PC-3 (cell line): ENCODE measurements at regions of chr16 and their contacts with region 1.

Region 1: DNA sequence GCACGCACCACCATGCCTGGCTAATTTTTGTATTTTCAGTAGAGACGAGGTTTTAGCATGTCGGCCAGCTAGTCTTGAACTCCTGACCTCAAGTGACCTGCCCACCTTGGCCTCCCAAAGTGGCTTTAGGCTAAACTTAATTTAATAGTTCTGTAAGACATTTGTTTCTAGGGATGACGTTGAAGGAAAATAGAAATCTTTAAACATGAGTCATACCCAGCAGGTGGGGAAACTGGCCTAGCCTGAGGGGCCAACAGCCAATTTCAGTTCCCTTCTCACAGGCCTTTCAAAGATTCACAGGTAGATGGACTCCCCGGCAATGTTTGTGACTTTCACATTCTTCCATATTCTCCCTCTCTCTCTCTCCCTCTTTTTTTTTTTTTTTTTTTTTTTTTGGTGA is 18.1 kb upstream of the ITPRIPL2 start:
- DNase-seq: peak; percentile 86
- ATAC-seq: peak; percentile 33
- H3K4me3 ChIP-seq: no peak overlapping the region
- H3K27ac ChIP-seq: peak overlapping the region; percentile 81
- H3K4me1 ChIP-seq: peaks cover 44% of the 10 kb centered on the region
- H3K27me3 ChIP-seq: no peaks in the 10 kb centered on the region
- CTCF ChIP-seq: no peak

Region 2: DNA sequence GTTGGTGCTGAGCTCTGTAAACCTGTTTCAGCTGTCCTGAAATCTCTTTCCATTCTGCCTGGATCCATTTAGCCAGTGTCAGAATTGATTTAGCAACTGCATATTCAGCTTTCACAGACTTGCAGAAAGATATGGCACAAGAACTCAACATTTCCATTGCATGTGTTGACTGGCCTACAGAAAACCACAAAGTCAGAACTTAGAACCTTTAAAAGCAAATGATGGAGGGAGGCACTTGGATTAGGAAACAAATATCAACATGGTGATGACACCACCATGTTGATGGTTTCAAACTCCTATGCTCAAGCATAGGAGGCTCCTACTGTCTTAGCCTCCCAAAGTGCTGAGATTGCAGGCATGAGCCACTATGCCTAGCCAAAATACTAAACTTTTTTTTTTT is 242.0 kb before region 1 on chr16:
- CTCF ChIA-PET with region 1: no interaction called
- POLR2A ChIA-PET with region 1: no interaction called
- intact Hi-C with region 1: no loop called
- DNase-seq: no peak
- ATAC-seq: no peak
- H3K4me3 ChIP-seq: no peak overlapping the region
- H3K27ac ChIP-seq: no peak overlapping the region
- H3K4me1 ChIP-seq: no peaks in the 10 kb centered on the region
- H3K27me3 ChIP-seq: no peaks in the 10 kb centered on the region
- CTCF ChIP-seq: no peak

Region 3: GRCh38 chr16:18969050-18969854 is 126.4 kb before region 1 on chr16:
- CTCF ChIA-PET with region 1: no interaction called
- POLR2A ChIA-PET with region 1: no interaction called
- intact Hi-C with region 1: no loop called
- DNase-seq: peak; percentile 78
- ATAC-seq: peak; percentile 94
- H3K4me3 ChIP-seq: peak overlapping the region; percentile 65
- H3K27ac ChIP-seq: no peak overlapping the region
- H3K4me1 ChIP-seq: no peaks in the 10 kb centered on the region
- H3K27me3 ChIP-seq: no peaks in the 10 kb centered on the region
- CTCF ChIP-seq: peak; percentile 87

Region 4: DNA sequence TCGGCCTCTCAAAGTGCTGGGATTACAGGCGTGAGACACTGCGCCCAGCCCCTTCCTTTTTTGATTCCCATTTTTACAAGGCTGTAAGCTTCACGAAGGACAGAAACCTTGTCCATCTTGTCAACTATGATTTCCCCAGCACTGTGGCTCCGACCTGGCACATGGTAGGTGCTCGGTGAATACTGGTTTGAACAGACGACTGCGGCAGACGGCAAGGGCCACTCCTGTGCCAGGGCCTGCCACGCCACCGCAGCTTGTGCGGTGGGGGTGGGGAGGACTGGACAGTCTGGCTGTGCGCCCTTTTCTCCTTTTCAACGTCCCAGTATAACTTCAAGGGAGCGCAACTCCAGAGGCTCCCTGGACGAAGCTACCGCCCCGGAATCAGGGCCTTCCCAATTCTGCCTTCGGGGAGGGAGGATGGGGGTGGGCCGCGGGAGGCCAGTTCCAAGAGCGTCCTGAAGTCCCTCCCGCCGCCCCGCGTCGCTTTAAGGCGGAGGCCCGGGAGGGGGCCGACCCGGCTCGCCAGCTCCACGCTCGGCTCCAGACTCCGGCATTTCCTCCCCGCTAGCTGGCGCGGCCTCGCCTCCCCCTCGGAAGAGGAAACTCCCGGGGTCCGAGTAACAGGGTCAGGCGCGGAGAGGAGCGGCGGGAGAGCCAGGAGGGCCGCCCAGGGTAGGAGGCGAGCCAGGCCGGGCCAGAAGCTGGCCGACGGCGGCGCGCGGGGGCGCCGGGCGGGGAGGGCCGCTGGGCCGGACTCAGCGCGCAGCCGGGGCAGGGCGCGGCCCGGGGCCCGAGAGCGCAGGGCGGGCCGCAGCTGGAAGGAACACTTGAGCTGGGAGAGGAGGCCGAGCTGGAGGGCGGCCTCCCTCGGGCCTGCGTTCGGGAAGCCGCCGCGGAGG is 18.0 kb after region 1 on chr16 and contains the start of gene ITPRIPL2:
- CTCF ChIA-PET with region 1: no interaction called
- POLR2A ChIA-PET with region 1: interaction called, 16 read pairs
- intact Hi-C with region 1: loop called (anchors 1 kb)
- DNase-seq: peak; percentile 87
- ATAC-seq: peak; percentile 79
- H3K4me3 ChIP-seq: peak within 1 kb of the TSS; percentile 76
- H3K27ac ChIP-seq: peak within 1 kb of the TSS; percentile 88
- H3K4me1 ChIP-seq: peaks cover 52% of the 10 kb centered on the region
- H3K27me3 ChIP-seq: no peaks in the 10 kb centered on the region
- CTCF ChIP-seq: no peak
- total RNA-seq, gene ITPRIPL2: 21.6 and 31.5 TPM in 2 replicates

Region 5: DNA sequence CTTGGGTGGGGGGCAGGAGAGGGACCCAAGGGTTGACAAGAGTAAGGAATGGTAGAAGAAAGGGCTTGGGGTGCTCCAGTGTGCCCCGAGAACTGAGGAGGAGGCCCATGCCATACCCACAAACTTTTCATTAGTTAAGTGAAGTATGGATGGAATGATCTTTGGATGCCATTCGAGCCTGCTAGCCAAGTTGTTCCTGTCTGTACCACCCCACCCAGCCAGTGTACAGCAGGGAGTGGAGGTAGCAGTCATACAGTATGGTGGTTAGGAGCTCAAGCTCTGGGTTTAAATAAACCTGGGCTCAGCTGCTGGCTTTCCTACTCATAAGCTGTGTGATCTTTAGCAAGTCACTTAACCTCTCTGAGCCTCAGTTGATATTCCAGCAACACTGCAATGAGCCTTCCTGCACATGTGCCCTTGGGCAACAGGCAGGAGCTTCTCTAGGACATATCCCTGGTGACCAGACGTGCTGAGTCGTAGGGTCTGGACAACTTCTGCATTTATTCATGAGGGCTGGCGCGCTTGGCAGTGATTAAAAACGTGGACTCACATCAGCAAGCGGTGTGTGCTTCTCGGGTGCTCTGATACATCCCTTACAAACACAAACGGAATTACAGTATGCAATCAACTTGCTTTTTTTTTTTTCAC is 41.0 kb after region 1 on chr16:
- CTCF ChIA-PET with region 1: no interaction called
- POLR2A ChIA-PET with region 1: no interaction called
- intact Hi-C with region 1: loop called (anchors 1 kb)
- DNase-seq: peak; percentile 13
- ATAC-seq: peak; percentile 38
- H3K4me3 ChIP-seq: peak overlapping the region; percentile 56
- H3K27ac ChIP-seq: peak overlapping the region; percentile 97
- H3K4me1 ChIP-seq: peaks cover 43% of the 10 kb centered on the region
- H3K27me3 ChIP-seq: no peaks in the 10 kb centered on the region
- CTCF ChIP-seq: no peak

Region 6: GRCh38 chr16:19236561-19237209 is 141.0 kb after region 1 on chr16:
- CTCF ChIA-PET with region 1: no interaction called
- POLR2A ChIA-PET with region 1: no interaction called
- intact Hi-C with region 1: no loop called
- DNase-seq: peak; percentile 82
- ATAC-seq: peak; percentile 98
- H3K4me3 ChIP-seq: no peak overlapping the region
- H3K27ac ChIP-seq: peak overlapping the region; percentile 72
- H3K4me1 ChIP-seq: peaks cover 15% of the 10 kb centered on the region
- H3K27me3 ChIP-seq: no peaks in the 10 kb centered on the region
- CTCF ChIP-seq: no peak